Breast epithelium (tissue), 4 donors: ENCODE measurements at regions of chr2 and their contacts with region 1.

Region 1: GRCh38 chr2:232884549-232885263 is 14.6 kb downstream of the SNORC start:
- DNase-seq: peak in 1 of 2 donors; percentile 47
- H3K4me3 ChIP-seq: no peak overlapping the region
- H3K27ac ChIP-seq: peak overlapping the region; percentile 50 to 52
- H3K4me1 ChIP-seq: no peaks in the 10 kb centered on the region
- H3K27me3 ChIP-seq: no peaks in the 10 kb centered on the region
- CTCF ChIP-seq: no peak
- POLR2A ChIP-seq: no peak

Region 2: GRCh38 chr2:231364961-231365810 is 1519.5 kb before region 1 on chr2:
- intact Hi-C with region 1: loop called (anchors 5 kb)
- DNase-seq: peak in 1 of 2 donors; percentile 60
- H3K4me3 ChIP-seq: peak overlapping the region in 2 of 3 donors; percentile 18 to 28
- H3K27ac ChIP-seq: peak overlapping the region; percentile 59 to 70
- H3K4me1 ChIP-seq: no peaks in the 10 kb centered on the region
- H3K27me3 ChIP-seq: no peaks in the 10 kb centered on the region
- CTCF ChIP-seq: no peak
- POLR2A ChIP-seq: no peak

Region 3: GRCh38 chr2:233075966-233076339 is 191.2 kb after region 1 on chr2:
- intact Hi-C with region 1: no loop called
- DNase-seq: peak in 1 of 2 donors; percentile 5
- H3K4me3 ChIP-seq: no peak overlapping the region
- H3K27ac ChIP-seq: peak overlapping the region; percentile 49 to 56
- H3K4me1 ChIP-seq: peaks cover 0 to 11% of the 10 kb centered on the region in 2 donors
- H3K27me3 ChIP-seq: no peaks in the 10 kb centered on the region
- CTCF ChIP-seq: no peak
- POLR2A ChIP-seq: no peak